K562 (cell line): ENCODE measurements at regions of chr4 and their contacts with region 1.

Region 1: DNA sequence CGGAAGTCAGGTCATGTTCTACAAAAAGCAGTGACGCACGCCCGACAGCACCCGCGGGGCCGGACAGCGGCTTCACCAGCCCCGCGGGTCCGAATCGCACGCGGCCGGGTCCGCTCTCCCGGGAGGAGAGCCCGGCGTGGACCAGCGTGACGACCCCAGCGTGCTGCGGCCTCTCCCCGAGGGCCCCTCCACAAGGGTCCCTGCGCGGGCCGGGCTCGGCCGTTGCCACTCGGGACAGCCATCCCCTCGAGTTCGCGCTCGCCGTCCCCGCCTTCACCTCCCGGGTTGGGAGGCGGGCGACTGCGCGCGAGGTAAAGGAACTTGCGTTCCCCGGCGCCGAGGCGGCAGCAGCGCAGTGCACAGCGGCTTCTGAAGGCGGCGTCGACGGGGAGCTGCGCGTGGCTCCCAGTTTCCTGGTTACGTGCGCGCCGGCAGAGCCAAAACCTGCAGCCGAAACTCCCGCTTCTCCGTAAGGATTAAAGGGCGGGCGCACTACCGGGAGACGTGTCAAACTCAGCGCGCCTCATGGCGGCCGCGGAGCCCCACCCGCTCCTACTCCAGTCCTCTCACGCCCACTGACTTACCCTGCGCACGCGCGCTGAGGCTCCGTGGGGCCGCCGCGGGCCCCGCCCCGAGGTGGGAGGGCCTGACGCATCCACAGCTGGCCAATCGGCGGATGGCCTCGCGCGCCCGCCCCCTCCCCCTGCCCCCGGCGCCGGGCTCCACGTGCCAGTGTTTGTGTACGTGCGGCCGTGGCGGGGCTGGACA is 416 bp upstream of the LRP2BP start:
- DNase-seq: peak; percentile 98 to 99 (median 99)
- ATAC-seq: peak; percentile 95
- H3K4me3 ChIP-seq: peak overlapping the region; percentile 56
- H3K27ac ChIP-seq: peak overlapping the region; percentile 94
- H3K4me1 ChIP-seq: peaks cover 2 to 20% of the 10 kb centered on the region in 2 experiments; a peak in 4 of 5 replicates
- H3K27me3 ChIP-seq: no peaks in the 10 kb centered on the region
- CTCF ChIP-seq: no peak
- EP300 ChIP-seq: no peak
- POLR2A ChIP-seq: peak; percentile 87
- RAD21 ChIP-seq: no peak

Region 2: DNA sequence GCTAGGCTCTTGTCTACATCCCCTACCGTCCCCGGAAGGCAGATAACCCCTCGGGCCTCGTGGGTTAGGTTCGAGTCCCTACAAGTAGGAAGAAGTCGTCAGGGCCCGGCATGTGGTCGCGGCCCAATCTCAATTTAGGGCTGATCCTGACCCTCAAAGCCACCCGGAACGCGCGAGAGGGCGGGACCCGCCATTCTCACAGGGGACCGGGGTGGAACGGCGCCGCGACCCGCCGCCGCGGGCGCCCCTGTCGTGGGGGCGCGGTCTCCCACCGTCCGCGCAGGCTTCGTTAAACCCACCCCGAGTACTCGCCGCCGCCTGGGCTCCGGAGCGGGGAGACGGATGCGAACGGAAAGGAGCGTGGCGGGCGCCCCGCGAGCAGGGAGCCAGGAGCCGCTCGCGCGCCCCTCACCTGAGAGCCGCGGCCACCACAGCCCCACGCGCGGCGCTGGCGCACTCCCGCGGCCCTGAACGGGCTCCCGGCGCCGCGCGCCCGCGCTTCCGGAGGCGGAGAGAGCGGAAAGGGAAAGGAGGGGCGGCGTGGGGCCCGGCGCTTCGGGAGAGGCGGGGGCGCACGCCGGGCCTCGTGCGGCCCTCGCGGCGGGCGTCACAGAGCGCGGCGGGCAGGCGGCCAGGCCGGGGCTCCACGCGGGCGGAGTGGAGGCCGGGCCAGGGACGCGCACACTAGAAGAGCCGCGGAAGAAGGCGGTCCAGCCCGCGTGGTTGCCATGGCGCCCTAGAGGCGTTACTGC is 192.5 kb before region 1 on chr4 and contains the start of gene CFAP97:
- CTCF ChIA-PET with region 1: no interaction called
- POLR2A ChIA-PET with region 1: no interaction called
- in situ Hi-C with region 1: loop called (anchors 10 kb)
- intact Hi-C with region 1: loop called (anchors 2 kb)
- DNase-seq: peak; percentile 85 to 88 (median 86)
- ATAC-seq: peak; percentile 79
- H3K4me3 ChIP-seq: peak within 1 kb of the TSS; percentile 70
- H3K27ac ChIP-seq: peak within 1 kb of the TSS; percentile 93
- H3K4me1 ChIP-seq: peaks cover 20% of the 10 kb centered on the region in 2 experiments
- H3K27me3 ChIP-seq: no peaks in the 10 kb centered on the region
- CTCF ChIP-seq: peak in 1 of 3 experiments; percentile 10; a peak in 1 of 6 replicates
- EP300 ChIP-seq: no peak
- POLR2A ChIP-seq: peak; percentile 70
- RAD21 ChIP-seq: no peak
- polyA plus RNA-seq, gene CFAP97: 17.3 to 42.7 TPM

Region 3: DNA sequence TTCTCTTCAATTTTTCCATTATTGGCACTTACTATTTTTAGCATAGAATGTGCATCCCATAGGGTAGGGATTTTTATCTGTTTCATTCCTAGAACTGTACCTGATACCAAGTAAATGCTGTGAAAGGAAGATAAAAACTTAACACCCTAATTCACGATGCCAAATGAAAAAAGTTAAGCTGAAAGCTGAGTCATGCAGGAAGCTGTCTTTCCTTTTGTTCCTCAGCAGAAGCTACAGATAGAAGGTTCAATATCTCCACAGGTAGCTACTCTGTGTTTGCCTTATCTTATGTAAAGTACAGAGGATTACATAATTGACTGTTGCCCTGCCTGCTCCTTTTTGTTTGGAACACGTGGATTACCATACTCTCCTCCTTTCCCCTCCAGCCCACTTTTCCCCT is 77.5 kb before region 1 on chr4:
- CTCF ChIA-PET with region 1: no interaction called
- POLR2A ChIA-PET with region 1: interaction called, 3 read pairs
- in situ Hi-C with region 1: no loop called
- intact Hi-C with region 1: loop called (anchors 5 kb)
- DNase-seq: peak; percentile 27 to 82 (median 37)
- ATAC-seq: peak; percentile 90
- H3K4me3 ChIP-seq: no peak overlapping the region
- H3K27ac ChIP-seq: peak overlapping the region; percentile 72
- H3K4me1 ChIP-seq: peaks cover 0 to 12% of the 10 kb centered on the region in 2 experiments; a peak in 2 of 5 replicates
- H3K27me3 ChIP-seq: no peaks in the 10 kb centered on the region
- CTCF ChIP-seq: no peak
- EP300 ChIP-seq: peak; percentile 86
- POLR2A ChIP-seq: no peak
- RAD21 ChIP-seq: no peak

Region 4: DNA sequence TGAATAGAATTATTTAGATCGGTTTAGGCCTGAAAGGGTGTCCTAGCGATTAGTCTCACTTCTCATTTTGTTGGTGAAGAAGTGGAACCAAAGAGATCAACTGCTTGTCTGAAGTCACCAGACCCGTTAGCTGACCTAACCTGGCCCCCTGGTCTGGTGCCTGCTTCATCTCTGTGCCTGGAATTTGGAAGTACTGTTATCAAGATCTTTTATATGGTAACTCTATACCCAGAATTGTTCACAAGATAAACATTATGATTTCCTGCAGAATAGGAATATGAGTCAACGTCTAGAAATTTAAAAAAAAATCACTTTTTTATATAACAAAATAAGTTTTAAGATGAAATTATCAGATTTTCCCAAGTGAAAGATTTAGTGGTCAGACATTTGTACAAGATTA is 37.6 kb before region 1 on chr4:
- CTCF ChIA-PET with region 1: no interaction called
- POLR2A ChIA-PET with region 1: no interaction called
- in situ Hi-C with region 1: no loop called
- intact Hi-C with region 1: loop called (anchors 2 kb)
- DNase-seq: peak; percentile 29 to 58 (median 51)
- ATAC-seq: peak; percentile 59
- H3K4me3 ChIP-seq: no peak overlapping the region
- H3K27ac ChIP-seq: peak overlapping the region; percentile 58; the same call in 2 of the 3 replicates
- H3K4me1 ChIP-seq: peaks cover 13 to 37% of the 10 kb centered on the region in 2 experiments
- H3K27me3 ChIP-seq: no peaks in the 10 kb centered on the region
- CTCF ChIP-seq: no peak
- EP300 ChIP-seq: no peak
- POLR2A ChIP-seq: no peak
- RAD21 ChIP-seq: no peak

Region 5: GRCh38 chr4:185384930-185385331 is 11.2 kb before region 1 on chr4:
- CTCF ChIA-PET with region 1: no interaction called
- POLR2A ChIA-PET with region 1: interaction called, 21 read pairs
- in situ Hi-C with region 1: no loop called
- intact Hi-C with region 1: no loop called
- DNase-seq: peak in 3 of 4 experiments; percentile 10 to 67 (median 51)
- ATAC-seq: peak; percentile 77
- H3K4me3 ChIP-seq: no peak overlapping the region
- H3K27ac ChIP-seq: no peak overlapping the region; the same call in 2 of the 3 replicates
- H3K4me1 ChIP-seq: peaks cover 10 to 16% of the 10 kb centered on the region in 2 experiments; a peak in 3 of 5 replicates
- H3K27me3 ChIP-seq: no peaks in the 10 kb centered on the region
- CTCF ChIP-seq: no peak
- EP300 ChIP-seq: peak; percentile 68
- POLR2A ChIP-seq: no peak
- RAD21 ChIP-seq: no peak

Region 6: DNA sequence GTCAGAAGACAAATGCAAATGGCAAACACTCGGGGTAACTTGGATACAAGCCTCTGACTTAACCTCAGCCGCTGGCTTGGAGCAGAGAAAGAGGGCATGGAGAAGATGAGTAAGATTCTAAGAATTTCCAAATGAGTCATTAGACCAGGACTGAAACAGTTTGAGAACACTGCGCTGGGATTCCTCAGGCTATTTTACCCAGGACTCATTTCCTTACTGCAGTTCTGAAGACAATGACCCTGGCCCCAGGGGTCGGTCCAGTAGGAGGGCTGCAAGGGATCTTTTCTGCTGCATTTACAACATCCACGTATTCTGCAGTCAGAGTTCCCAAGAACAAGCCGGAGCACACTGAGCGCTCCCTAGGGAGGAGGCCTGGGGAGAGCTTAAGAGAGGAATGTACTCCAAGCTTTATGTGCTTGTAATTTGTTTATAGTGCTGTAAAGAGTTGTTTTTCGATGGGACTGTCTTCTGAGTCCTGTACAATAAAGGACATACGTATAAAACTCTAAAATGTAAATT is 443.1 kb after region 1 on chr4:
- CTCF ChIA-PET with region 1: no interaction called
- POLR2A ChIA-PET with region 1: no interaction called
- in situ Hi-C with region 1: no loop called
- intact Hi-C with region 1: no loop called
- DNase-seq: no peak
- ATAC-seq: no peak
- H3K4me3 ChIP-seq: no peak overlapping the region
- H3K27ac ChIP-seq: no peak overlapping the region
- H3K4me1 ChIP-seq: no peaks in the 10 kb centered on the region
- H3K27me3 ChIP-seq: peaks cover 2 to 11% of the 10 kb centered on the region in 2 experiments; a peak in 2 of 5 replicates
- CTCF ChIP-seq: no peak
- EP300 ChIP-seq: no peak
- POLR2A ChIP-seq: no peak
- RAD21 ChIP-seq: no peak